Left ventricle myocardium superior (tissue), 1 donor: ENCODE measurements at regions of chr11 and their contacts with region 1.

Region 1: DNA sequence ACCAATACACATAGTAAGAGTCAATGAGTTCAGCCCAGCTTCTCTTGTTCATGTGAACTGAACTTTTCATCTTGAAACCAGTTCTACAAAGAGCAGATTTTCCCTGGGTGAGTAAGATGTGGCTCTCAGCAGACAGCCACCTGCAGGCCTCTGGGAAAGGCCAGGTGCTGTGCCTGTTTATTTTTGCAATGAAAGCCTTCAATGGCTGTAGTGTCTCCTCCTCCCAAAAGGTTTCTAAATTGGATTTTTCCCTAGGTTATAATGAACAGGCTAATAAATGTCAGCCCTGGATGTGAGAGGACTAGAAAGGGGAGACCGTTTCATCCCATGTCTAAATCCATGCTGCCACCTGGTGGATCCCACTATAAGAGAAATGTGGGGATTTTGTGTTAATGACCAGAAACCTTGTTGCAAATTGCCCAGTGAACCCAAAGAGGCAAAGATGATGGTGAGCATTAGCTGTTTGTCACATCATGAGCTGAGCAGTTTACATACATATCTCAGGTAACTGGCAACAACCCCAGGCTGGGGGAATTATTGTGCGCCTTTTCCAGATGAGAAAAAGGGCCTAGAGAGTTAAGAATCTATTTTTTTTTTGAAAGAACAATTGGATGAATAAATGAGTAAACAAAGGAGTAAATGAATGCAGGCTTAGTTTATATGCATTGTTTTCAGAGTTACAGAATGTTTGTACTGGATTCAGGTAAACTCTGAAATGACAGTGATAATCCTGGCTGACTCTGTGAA is 12.7 kb downstream of the C11orf91 start:
- DNase-seq: no peak
- ATAC-seq: no peak

Region 2: DNA sequence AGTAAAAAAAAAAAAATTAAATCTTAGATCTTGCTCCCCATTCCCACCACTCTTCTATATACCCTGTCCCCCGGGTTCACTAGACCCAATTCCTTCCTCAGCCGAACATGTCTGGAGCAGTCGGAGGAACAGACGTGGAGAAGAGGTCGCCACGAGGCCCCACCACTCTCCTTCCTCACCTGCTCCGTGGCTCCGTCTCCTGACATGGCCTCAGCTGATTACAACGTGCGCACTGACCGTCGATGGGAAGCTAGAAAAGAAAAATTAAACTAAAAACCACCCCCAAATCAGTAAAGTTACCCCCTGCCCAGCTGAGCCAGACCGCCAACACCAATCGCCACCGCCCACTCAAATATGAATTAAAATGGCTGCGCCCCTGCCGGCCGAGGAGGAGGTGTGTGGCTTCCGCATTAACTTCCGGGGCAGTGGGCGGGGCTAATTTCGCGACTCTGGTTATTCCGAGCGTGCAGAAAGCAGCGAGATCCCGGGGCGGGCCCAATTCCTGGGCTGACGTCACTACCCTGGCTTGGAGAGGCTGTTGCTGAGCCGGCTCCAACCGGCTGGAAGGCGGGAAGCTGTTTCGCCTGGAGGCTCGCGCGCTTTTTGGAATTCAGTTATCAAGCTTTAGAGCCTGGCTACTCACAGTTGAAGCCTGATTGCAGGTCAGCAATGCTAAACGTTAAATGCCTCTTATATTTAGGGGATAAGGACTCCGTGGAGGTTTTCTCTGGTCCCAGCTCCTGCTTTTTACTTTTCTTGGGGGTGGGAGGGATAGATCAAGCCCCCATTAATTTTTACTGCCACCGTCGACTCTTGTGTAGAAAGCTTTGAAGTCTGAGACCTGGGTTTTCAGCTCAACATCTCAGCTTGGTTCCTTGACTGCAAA is 526.5 kb before region 1 on chr11 and contains the start of gene CSTF3:
- intact Hi-C with region 1: loop called (anchors 10 kb)
- DNase-seq: peak; percentile 100
- ATAC-seq: peak; percentile 99
- total RNA-seq, gene CSTF3: 9.8 TPM

Region 3: DNA sequence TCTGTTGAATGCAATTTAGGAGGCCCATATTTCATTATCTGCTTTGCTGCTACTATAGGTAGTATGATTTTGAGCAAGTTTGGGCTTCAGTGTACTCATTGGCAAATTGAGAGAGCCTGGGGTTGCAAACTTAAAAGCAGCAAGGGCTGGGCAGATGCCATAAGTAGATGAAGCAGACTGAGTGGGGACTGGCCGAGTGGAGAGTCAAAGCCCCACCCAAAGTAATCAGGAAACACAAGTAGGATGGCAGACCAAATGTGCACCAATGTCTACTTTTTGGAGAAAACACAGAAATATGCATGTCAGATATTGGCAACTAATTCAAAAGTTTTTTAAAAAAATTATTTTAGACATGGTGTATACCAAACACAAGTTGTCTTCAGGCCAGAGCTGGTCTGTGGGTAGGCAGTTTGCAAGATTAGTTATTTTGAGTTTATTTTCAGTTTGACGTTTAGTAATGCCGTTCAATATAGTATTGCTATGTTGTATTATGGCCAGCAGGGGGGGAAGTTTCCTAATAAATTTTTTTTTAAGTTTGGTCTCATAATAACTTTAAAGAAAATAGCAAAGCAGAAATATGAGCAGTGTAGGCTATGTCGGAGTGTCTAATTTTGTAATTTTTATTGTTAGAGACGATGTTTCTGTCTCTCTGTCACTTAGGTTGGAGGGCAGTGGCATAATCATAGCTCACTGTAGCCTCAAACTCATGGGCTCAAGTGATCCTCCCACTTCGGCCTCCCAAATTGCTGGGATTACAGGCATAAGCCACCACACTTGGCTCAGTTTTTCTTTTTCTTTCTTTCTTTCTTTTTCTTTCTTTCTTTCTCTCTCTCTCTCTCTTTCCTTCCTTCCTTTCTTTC is 325.6 kb before region 1 on chr11:
- intact Hi-C with region 1: loop called (anchors 2 kb)
- DNase-seq: no peak
- ATAC-seq: peak; percentile 25

Region 4: GRCh38 chr11:33542921-33543320 is 145.0 kb before region 1 on chr11:
- intact Hi-C with region 1: loop called (anchors 5 kb)
- DNase-seq: peak; percentile 53
- ATAC-seq: peak; percentile 43

Region 5: GRCh38 chr11:33736148-33736809 is 48.4 kb after region 1 on chr11 and contains the start of gene CD59:
- intact Hi-C with region 1: loop called (anchors 2 kb)
- DNase-seq: peak; percentile 99
- ATAC-seq: peak; percentile 96
- total RNA-seq, gene CD59: 814 TPM

Region 6: GRCh38 chr11:33790040-33790439 is 102.1 kb after region 1 on chr11:
- intact Hi-C with region 1: no loop called
- DNase-seq: no peak
- ATAC-seq: no peak